ENCODE measurements at regions of chr11 and their contacts with region 1.

Region 1: DNA sequence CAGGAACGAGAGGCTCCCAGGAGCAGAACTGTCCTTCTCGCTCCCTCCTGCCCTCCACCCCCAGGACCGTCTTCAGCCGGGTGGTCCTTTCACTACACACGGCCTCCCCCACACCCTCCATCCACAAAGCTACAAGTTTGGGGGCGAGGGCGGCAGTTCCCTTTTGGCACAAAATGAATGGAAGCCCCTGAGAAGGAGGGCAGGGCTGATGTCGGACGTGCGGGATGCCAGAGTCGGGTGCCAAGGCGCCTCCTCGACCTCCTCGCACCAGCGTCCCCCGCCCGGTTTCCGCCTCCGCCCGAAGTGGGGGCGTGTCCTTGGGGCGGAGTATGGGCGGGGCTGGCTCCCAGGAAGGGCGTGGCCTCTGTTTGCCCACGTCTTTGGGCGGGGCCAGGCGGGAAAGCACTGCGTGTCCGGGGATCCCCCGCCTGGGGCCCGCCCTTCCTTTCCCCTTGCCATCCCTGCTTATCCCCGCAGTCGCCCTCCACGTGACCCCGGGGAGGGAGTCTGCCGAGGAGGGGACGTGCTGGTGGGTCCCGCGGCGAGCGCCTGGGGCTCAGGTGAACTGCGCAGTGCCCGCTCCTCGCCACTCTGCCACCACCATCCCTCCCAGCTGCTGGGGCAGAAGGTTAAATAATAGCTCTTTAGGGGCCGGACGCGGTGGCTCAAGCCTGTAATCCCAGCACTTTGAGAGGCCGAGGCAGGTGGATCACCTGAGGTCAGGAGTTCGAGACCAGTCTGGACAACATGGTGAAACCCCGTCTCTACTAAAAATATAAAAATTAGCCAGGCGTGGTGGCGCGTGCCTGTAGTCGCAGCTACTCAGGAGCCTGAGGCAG is 937 bp upstream of the EFEMP2 start:
- DNase-seq: peak; percentile 96
- ATAC-seq: peak; percentile 88
- H3K4me3 Mint-ChIP-seq: peak overlapping the region; percentile 83
- H3K27ac Mint-ChIP-seq: peak overlapping the region; percentile 83
- H3K4me1 Mint-ChIP-seq: peaks cover 67% of the 10 kb centered on the region
- H3K27me3 Mint-ChIP-seq: peaks cover 5% of the 10 kb centered on the region

Region 2: GRCh38 chr11:65524741-65525545 is 348.6 kb before region 1 on chr11 and contains the start of gene SCYL1:
- CTCF ChIA-PET with region 1: no interaction called
- POLR2A ChIA-PET with region 1: no interaction called
- DNase-seq: peak; percentile 84
- ATAC-seq: peak; percentile 79
- H3K4me3 Mint-ChIP-seq: peak within 1 kb of the TSS; percentile 83
- H3K27ac Mint-ChIP-seq: peak within 1 kb of the TSS; percentile 89
- H3K4me1 Mint-ChIP-seq: peaks cover 62% of the 10 kb centered on the region
- H3K27me3 Mint-ChIP-seq: no peaks in the 10 kb centered on the region
- total RNA-seq, gene SCYL1: 68.0 to 69.5 TPM

Region 3: DNA sequence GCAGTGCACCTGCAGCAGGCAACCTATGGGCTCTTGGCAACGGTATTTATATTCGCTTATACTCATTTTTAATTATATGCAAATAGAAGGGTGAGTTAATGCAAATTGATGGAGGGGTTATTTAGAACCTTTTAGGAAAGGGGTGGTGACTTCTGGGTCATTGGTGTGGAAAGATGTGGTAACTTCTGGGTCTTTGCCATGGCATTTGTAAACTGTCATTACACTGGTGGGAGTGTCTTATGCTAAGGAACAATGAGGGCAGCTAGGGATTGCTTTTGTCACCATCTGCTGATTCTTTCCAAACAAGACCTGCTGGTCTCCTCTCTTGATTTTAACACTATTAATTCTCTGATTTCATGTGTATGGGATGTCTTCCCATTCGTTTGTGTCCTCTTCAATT is 173.1 kb before region 1 on chr11:
- CTCF ChIA-PET with region 1: no interaction called
- POLR2A ChIA-PET with region 1: no interaction called
- DNase-seq: no peak
- ATAC-seq: no peak
- H3K4me3 Mint-ChIP-seq: no peak overlapping the region
- H3K27ac Mint-ChIP-seq: no peak overlapping the region
- H3K4me1 Mint-ChIP-seq: no peaks in the 10 kb centered on the region
- H3K27me3 Mint-ChIP-seq: peaks cover 21% of the 10 kb centered on the region

Region 4: GRCh38 chr11:65850831-65851811 is 22.4 kb before region 1 on chr11:
- CTCF ChIA-PET with region 1: no interaction called
- POLR2A ChIA-PET with region 1: interaction called, 305 read pairs
- DNase-seq: peak; percentile 54
- ATAC-seq: peak; percentile 20
- H3K4me3 Mint-ChIP-seq: no peak overlapping the region
- H3K27ac Mint-ChIP-seq: no peak overlapping the region
- H3K4me1 Mint-ChIP-seq: peaks cover 29% of the 10 kb centered on the region
- H3K27me3 Mint-ChIP-seq: no peaks in the 10 kb centered on the region